ENCODE measurements at regions of chr21 and their contacts with region 1.

Region 1: GRCh38 chr21:42227909-42228708 is 9.2 kb downstream of the ABCG1 start:
- DNase-seq: peak; percentile 87 to 100 (median 90)
- H3K4me3 ChIP-seq: peak overlapping the region in 1 of 2 donors; percentile 17
- H3K4me3 Mint-ChIP-seq: peak overlapping the region; percentile 65 to 77 (median 70)
- H3K27ac ChIP-seq: peak overlapping the region; percentile 80
- H3K27ac Mint-ChIP-seq: peak overlapping the region; percentile 93 to 99 (median 98)
- H3K4me1 ChIP-seq: peaks cover 68% of the 10 kb centered on the region
- H3K4me1 Mint-ChIP-seq: peaks cover 40 to 90% (median 69%) of the 10 kb centered on the region in 4 donors
- H3K27me3 ChIP-seq: no peaks in the 10 kb centered on the region
- H3K27me3 Mint-ChIP-seq: no peaks in the 10 kb centered on the region

Region 2: GRCh38 chr21:42238185-42238934 is 10.3 kb after region 1 on chr21:
- CTCF ChIA-PET with region 1: interaction called, 13 read pairs
- POLR2A ChIA-PET with region 1: interaction called, 18 read pairs
- intact Hi-C with region 1: no loop called
- DNase-seq: peak; percentile 77 to 89 (median 83)
- H3K4me3 ChIP-seq: peak overlapping the region in 1 of 2 donors; percentile 44
- H3K4me3 Mint-ChIP-seq: peak overlapping the region; percentile 49 to 88 (median 75)
- H3K27ac ChIP-seq: peak overlapping the region; percentile 96
- H3K27ac Mint-ChIP-seq: peak overlapping the region; percentile 88 to 99 (median 96)
- H3K4me1 ChIP-seq: peaks cover 66% of the 10 kb centered on the region
- H3K4me1 Mint-ChIP-seq: peaks cover 50 to 86% (median 59%) of the 10 kb centered on the region in 4 donors
- H3K27me3 ChIP-seq: no peaks in the 10 kb centered on the region
- H3K27me3 Mint-ChIP-seq: no peaks in the 10 kb centered on the region